ENCODE measurements at regions of chr2 and their contacts with region 1.

Region 1: GRCh38 chr2:10220902-10221391 is 81.8 kb upstream of the HPCAL1 start:
- DNase-seq: no peak
- ATAC-seq: no peak
- H3K4me3 ChIP-seq: no peak overlapping the region
- H3K4me3 Mint-ChIP-seq: no peak overlapping the region
- H3K27ac ChIP-seq: no peak overlapping the region
- H3K27ac Mint-ChIP-seq: peak overlapping the region in 1 of 9 donors; percentile 25
- H3K4me1 ChIP-seq: no peaks in the 10 kb centered on the region
- H3K4me1 Mint-ChIP-seq: peaks cover 0 to 2% (median 0%) of the 10 kb centered on the region in 7 donors
- H3K27me3 ChIP-seq: no peaks in the 10 kb centered on the region
- H3K27me3 Mint-ChIP-seq: no peaks in the 10 kb centered on the region

Region 2: DNA sequence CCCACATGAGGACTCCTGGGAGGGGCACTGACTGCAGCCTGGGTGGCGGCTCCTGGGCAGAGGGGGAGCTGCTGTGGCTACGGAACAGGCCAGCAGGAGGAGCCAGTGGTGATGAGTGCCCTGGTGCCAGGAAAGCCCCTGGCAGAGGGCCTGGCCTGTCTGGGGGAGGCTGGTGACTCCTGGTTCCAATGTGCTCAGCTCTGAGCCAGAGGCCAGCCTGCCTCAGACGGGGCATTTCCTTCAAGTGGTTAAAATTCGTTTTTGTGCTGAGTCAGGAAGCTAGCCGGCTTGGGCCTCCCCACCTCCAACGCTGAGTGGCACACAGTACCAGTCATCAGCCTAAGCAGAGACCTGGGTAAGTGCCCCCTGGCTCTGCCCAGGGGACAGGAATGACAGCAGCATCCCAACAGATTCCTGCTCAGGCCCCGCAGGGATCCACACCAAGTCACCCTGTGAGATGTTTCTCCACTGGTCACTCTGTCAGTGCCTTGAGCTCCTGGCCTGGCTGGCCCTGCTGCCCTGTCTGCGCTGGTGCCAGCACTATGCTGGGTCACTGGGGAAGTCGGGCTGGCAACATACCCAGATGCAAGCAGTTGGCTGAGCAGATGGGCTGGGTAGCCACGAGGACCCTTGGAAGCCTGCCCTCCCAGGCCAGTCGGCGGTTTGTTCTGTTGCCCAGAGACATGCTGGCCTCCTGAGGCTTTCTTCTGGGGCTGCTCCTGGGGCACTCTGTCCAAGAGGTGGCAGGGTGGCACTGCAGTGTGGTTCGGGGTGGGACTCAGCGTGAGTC is 184.7 kb before region 1 on chr2:
- CTCF ChIA-PET with region 1: no interaction called
- POLR2A ChIA-PET with region 1: no interaction called
- intact Hi-C with region 1: no loop called
- DNase-seq: peak in 1 of 9 donors; percentile 31
- ATAC-seq: peak; percentile 91
- H3K4me3 ChIP-seq: no peak overlapping the region
- H3K4me3 Mint-ChIP-seq: no peak overlapping the region
- H3K27ac ChIP-seq: no peak overlapping the region
- H3K27ac Mint-ChIP-seq: no peak overlapping the region
- H3K4me1 ChIP-seq: no peaks in the 10 kb centered on the region
- H3K4me1 Mint-ChIP-seq: peaks cover 0 to 16% (median 7%) of the 10 kb centered on the region in 7 donors
- H3K27me3 ChIP-seq: no peaks in the 10 kb centered on the region
- H3K27me3 Mint-ChIP-seq: peaks cover 0 to 19% (median 0%) of the 10 kb centered on the region in 5 donors

Region 3: GRCh38 chr2:10141736-10142642 is 79.0 kb before region 1 on chr2:
- CTCF ChIA-PET with region 1: no interaction called
- POLR2A ChIA-PET with region 1: no interaction called
- intact Hi-C with region 1: loop called in 1 of 2 experiments (anchors 10 kb)
- DNase-seq: peak in 6 of 9 donors; percentile 32 to 63 (median 55)
- ATAC-seq: peak; percentile 64
- H3K4me3 ChIP-seq: no peak overlapping the region
- H3K4me3 Mint-ChIP-seq: peak overlapping the region in 9 of 10 donors; percentile 52 to 80 (median 73)
- H3K27ac ChIP-seq: no peak overlapping the region
- H3K27ac Mint-ChIP-seq: peak overlapping the region in 7 of 9 donors; percentile 56 to 84 (median 71)
- H3K4me1 ChIP-seq: peaks cover 0 to 18% of the 10 kb centered on the region in 2 donors
- H3K4me1 Mint-ChIP-seq: peaks cover 17 to 43% (median 31%) of the 10 kb centered on the region in 7 donors
- H3K27me3 ChIP-seq: no peaks in the 10 kb centered on the region
- H3K27me3 Mint-ChIP-seq: no peaks in the 10 kb centered on the region

Measured in naive thymus-derived CD4-positive, alpha-beta T cell (primary cell).